ENCODE measurements at regions of chrX and their contacts with region 1.

Region 1: DNA sequence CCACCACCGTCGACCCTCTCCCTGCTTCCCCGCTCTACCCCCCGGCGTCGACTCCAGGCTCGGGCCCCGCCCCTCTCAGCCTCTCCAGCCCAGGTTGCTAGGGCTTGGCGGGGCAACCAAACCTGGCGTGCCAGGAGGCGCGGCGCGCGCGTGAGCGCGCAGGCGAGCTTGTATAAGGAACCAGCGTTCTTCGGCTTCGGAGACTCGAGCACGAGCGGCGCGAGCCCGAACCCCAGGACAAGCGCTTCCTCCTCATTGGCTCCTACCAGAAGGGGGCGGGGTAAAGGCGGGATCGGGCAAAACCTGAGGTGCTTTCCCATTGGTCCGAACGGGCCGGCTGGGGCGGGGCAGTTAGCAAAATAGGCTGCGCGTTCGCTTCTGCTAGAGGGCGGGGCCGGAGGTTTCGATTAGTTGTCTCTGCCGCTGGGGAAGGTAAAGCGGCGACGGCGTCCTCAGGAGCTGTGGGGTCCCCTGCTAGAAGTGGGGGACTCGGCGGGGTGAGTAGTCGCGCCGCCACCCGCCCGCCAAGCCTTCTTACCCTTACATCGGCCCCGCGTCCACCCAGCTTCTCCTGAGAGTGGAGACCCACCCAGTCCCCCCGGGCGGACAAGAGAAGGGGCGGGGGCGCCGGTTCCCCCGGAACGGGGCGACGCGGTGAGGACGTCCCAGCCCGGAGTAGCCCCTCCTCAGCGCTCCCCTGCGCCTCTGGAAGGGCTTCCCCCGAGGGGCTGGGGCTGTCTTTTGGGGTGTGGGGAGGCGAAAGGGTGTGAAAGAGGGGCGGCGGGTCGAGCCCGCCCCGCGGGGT is at the start of gene CDKL5:
- DNase-seq: peak; percentile 96
- H3K4me3 ChIP-seq: peak within 1 kb of the TSS; percentile 69 to 82 (median 78)
- H3K27ac ChIP-seq: peak within 1 kb of the TSS; percentile 79 to 86
- H3K4me1 ChIP-seq: no peaks in the 10 kb centered on the region
- H3K27me3 ChIP-seq: peaks cover 0 to 41% of the 10 kb centered on the region in 2 donors
- CTCF ChIP-seq: no peak
- POLR2A ChIP-seq: no peak
- total RNA-seq, gene CDKL5: 5.3 to 14.3 (median 6.9) TPM

Region 2: DNA sequence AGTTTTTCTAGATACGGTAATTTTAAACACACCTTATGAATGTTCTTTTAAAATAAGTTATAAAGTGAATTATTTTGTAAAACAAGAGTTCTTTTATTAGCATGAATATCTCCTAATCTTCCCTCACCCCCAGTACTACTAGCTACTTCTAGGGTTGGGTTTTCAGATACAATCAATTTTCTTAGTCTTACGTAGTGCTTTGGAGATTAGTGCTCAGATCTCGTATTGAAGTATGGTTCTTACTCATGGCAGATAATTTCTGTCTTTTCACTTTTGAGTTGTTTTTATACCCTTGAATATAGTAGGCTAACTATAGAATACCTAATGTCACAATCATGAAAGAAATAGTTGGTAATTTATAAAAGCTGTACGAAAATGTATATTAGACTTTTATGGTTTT is 43.2 kb after region 1 on chrX:
- intact Hi-C with region 1: loop called (anchors 2 kb)
- DNase-seq: no peak
- H3K4me3 ChIP-seq: no peak overlapping the region
- H3K27ac ChIP-seq: no peak overlapping the region
- H3K4me1 ChIP-seq: no peaks in the 10 kb centered on the region
- H3K27me3 ChIP-seq: peaks cover 0 to 5% of the 10 kb centered on the region in 2 donors
- CTCF ChIP-seq: no peak
- POLR2A ChIP-seq: no peak

Measured in breast epithelium (tissue), 4 donors.